ENCODE measurements at regions of chr9 and their contacts with region 1.

Region 1: DNA sequence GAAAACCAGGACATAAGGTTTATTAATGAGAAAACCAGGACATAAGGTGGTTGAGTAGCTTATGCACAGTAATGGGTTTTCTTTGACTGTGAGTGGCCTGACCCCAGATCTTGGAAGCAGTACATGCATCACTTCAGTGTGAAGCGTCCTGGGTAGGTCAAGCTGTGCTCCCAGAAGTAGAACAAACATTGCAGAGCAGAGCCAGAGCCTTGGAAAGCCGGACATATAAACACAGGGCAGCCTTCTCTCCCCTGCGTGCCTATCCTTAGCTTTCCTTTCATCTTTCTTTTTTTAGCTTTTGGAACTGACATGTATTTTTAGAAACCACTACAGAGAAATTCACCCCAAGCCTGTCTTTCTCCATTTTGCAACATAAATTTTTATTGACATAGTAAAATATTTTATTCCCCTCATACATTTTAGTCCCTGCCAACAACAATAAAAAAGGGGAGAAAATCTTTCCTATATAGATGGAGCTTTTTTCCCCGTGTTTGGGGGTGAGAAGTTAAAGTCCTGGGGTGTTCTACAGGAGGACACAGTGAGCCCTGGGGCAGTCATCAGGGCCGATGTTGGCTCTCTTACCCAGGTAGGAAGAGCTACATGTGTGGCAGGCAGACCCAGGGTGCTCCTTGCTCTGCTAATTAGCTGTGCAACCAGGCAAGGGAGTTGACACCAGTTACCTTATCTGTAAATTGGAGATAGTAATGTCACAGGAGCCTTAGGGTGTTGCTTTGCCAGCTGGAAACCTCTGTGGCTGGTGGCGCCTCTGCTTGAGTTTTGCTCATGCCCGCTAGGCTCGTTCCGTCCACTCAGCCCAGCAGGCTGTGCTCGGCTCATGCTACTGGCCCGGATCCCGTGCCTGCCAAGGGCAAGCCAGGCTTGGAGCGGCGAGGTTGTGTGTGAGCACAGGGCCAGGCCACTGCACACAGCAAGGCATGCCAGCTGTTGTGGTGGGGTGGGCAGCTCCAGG is 389.6 kb downstream of the KDM4C start:
- DNase-seq: peak; percentile 71 to 88 (median 81)
- ATAC-seq: peak; percentile 82 to 89 (median 87)
- H3K4me3 ChIP-seq: peak overlapping the region in 1 of 12 donors; percentile 15
- H3K27ac ChIP-seq: peak overlapping the region; percentile 53 to 94 (median 82)
- H3K4me1 ChIP-seq: peaks cover 0 to 68% (median 23%) of the 10 kb centered on the region in 12 donors
- H3K27me3 ChIP-seq: no peaks in the 10 kb centered on the region
- CTCF ChIP-seq: peak in 4 of 12 donors; percentile 13 to 25 (median 19)
- POLR2A ChIP-seq: no peak

Region 2: GRCh38 chr9:7088611-7089010 is 58.8 kb before region 1 on chr9:
- intact Hi-C with region 1: loop called in 1 of 10 experiments (anchors 10 kb)
- DNase-seq: no peak
- ATAC-seq: peak in 2 of 4 donors; percentile 26 to 61
- H3K4me3 ChIP-seq: no peak overlapping the region
- H3K27ac ChIP-seq: peak overlapping the region in 4 of 12 donors; percentile 10 to 70 (median 38)
- H3K4me1 ChIP-seq: peaks cover 0 to 15% (median 5%) of the 10 kb centered on the region in 12 donors
- H3K27me3 ChIP-seq: no peaks in the 10 kb centered on the region
- CTCF ChIP-seq: no peak
- POLR2A ChIP-seq: no peak

Region 3: DNA sequence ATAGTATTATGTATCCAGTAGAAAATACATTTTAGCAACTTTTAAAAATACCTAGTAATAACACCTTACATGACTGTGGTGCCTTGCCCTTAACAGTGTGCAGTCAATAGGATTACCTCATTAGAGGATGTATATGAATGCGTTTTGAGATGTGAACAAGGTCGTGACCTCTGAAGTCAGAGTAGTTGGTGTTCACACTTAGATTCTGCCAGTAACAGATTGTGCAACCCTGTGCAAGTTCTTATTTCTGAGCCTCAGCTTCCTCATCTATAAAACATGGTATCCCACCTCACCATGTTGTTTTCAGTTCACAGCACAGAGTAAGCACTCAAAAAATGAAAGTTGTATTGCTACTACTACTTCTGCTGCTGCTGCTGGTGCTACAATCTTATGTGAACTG is 42.3 kb before region 1 on chr9:
- intact Hi-C with region 1: loop called in 1 of 10 experiments (anchors 5 kb)
- DNase-seq: no peak
- ATAC-seq: peak in 1 of 4 donors; percentile 42
- H3K4me3 ChIP-seq: no peak overlapping the region
- H3K27ac ChIP-seq: no peak overlapping the region
- H3K4me1 ChIP-seq: peaks cover 0 to 12% (median 0%) of the 10 kb centered on the region in 12 donors
- H3K27me3 ChIP-seq: no peaks in the 10 kb centered on the region
- CTCF ChIP-seq: no peak
- POLR2A ChIP-seq: no peak

Measured in heart left ventricle (tissue), 16 donors.